Right ventricle myocardium inferior (tissue), 1 donor: ENCODE measurements at regions of chr6 and their contacts with region 1.

Region 1: DNA sequence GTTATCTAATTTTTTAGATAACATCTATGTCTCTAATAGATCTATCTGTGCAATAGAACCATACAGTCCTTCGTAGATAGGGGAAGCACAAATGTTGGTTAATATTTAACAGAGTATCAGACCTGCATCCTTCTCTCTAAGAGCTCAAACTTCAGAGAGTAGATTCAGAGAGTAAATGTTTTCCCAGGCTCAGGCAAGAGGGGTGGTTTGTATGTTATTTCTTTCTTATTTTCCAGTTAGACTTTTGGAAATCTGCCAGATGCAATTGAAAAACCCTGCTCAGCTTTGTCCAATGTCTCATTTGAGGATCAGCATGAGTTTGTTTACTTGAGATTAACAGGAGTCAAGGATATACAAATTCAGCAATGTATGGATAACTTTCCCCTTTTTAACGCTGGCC is 361.9 kb downstream of the BCKDHB start:
- DNase-seq: no peak
- ATAC-seq: no peak

Region 2: DNA sequence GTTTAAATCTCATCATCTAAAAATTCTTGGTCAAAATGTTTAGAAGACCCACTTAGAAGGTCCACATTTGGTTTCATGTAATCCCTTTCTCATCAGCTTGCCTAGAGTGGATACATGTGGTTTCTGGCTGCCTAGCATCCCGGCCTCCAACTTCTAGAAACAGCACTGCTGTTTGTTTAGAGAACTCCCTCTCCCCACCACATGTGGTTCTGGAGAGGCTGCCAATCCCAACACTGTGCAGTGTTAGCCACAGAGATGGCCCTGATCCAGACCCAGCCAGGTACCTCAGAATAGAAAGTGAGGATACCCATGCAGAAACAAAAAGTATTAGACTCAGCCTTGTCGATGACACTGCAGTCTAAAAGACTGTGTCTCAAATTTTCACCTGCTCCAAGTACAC is 120.1 kb before region 1 on chr6:
- intact Hi-C with region 1: loop called (anchors 5 kb)
- DNase-seq: no peak
- ATAC-seq: peak; percentile 68